ENCODE measurements at regions of chr19 and their contacts with region 1.

Region 1: GRCh38 chr19:30001791-30002190 is 59.8 kb downstream of the URI1 start:
- H3K4me3 ChIP-seq: no peak overlapping the region
- H3K27ac ChIP-seq: no peak overlapping the region
- H3K4me1 ChIP-seq: peaks cover 36% of the 10 kb centered on the region
- CTCF ChIP-seq: 0 out of 2 replicates have a peak, but pooled peaks have one; percentile 20

Region 2: GRCh38 chr19:29873024-29873800 is 128.6 kb before region 1 on chr19:
- CTCF ChIA-PET with region 1: no interaction called
- POLR2A ChIA-PET with region 1: no interaction called
- H3K4me3 ChIP-seq: peak overlapping the region; percentile 47
- H3K27ac ChIP-seq: peak overlapping the region; percentile 76; the same call in 1 of the 2 replicates
- H3K4me1 ChIP-seq: peaks cover 12% of the 10 kb centered on the region
- CTCF ChIP-seq: peak; percentile 86

Region 3: GRCh38 chr19:29988351-29988750 is 13.4 kb before region 1 on chr19:
- CTCF ChIA-PET with region 1: interaction called, 13 read pairs
- POLR2A ChIA-PET with region 1: interaction called, 3 read pairs
- H3K4me3 ChIP-seq: no peak overlapping the region
- H3K27ac ChIP-seq: no peak overlapping the region
- H3K4me1 ChIP-seq: peaks cover 4% of the 10 kb centered on the region; the same call in 1 of the 2 replicates
- CTCF ChIP-seq: no peak